ENCODE measurements at regions of chr7 and their contacts with region 1.

Region 1: DNA sequence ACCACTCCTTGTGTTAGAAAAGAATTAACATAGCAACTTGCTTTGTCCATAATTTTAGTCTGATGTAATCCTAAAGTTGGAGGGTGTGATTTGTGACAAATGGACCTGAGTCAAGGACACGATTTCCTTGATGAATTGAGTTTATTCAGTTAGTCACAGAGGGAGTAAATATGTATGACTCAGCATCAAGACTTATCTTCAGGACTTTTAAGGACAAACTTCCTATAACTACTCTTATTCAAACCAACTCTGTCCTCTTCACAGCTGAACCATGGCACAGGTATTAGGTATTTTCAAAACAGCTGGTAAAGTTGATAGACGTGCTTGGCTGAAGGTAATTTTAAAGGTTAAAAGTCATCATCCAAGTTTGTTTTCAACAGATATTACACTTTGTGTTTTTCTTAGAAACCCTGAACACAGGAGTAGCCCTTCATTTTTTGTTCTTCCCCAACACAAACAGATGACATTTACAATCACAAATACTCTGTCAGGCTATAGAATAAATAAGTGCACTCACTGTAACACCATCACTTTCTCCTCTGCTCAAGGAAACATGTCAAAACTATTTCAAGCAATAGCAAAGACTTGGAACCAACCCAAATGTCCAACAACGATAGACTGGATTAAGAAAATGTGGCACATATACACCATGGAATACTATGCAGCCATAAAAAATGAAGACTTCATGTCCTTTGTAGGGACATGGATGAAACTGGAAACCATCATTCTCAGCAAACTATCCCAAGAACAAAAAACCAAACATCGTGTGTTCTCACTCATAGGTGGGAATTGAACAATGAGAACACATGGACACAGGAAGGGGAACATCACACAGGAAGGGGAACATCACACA is 54.5 kb downstream of the COA1 start:
- DNase-seq: no peak
- H3K4me3 Mint-ChIP-seq: no peak overlapping the region
- H3K27ac Mint-ChIP-seq: peak overlapping the region; percentile 30
- H3K4me1 Mint-ChIP-seq: peaks cover 85% of the 10 kb centered on the region
- H3K27me3 Mint-ChIP-seq: no peaks in the 10 kb centered on the region

Region 2: GRCh38 chr7:43590862-43591550 is 83.8 kb before region 1 on chr7:
- CTCF ChIA-PET with region 1: no interaction called
- intact Hi-C with region 1: loop called (anchors 1 kb)
- DNase-seq: peak; percentile 73
- H3K4me3 Mint-ChIP-seq: peak overlapping the region; percentile 37
- H3K27ac Mint-ChIP-seq: peak overlapping the region; percentile 39
- H3K4me1 Mint-ChIP-seq: peaks cover 81% of the 10 kb centered on the region
- H3K27me3 Mint-ChIP-seq: no peaks in the 10 kb centered on the region

Region 3: GRCh38 chr7:43658718-43659548 is 15.9 kb before region 1 on chr7:
- CTCF ChIA-PET with region 1: no interaction called
- intact Hi-C with region 1: loop called (anchors 1 kb)
- DNase-seq: peak; percentile 74
- H3K4me3 Mint-ChIP-seq: peak overlapping the region; percentile 28
- H3K27ac Mint-ChIP-seq: peak overlapping the region; percentile 96
- H3K4me1 Mint-ChIP-seq: peaks cover 65% of the 10 kb centered on the region
- H3K27me3 Mint-ChIP-seq: no peaks in the 10 kb centered on the region

Region 4: GRCh38 chr7:43686991-43687390 is 12.2 kb after region 1 on chr7:
- CTCF ChIA-PET with region 1: interaction called, 5 read pairs
- intact Hi-C with region 1: loop called (anchors 1 kb)
- DNase-seq: no peak
- H3K4me3 Mint-ChIP-seq: no peak overlapping the region
- H3K27ac Mint-ChIP-seq: no peak overlapping the region
- H3K4me1 Mint-ChIP-seq: peaks cover 61% of the 10 kb centered on the region
- H3K27me3 Mint-ChIP-seq: no peaks in the 10 kb centered on the region

Region 5: DNA sequence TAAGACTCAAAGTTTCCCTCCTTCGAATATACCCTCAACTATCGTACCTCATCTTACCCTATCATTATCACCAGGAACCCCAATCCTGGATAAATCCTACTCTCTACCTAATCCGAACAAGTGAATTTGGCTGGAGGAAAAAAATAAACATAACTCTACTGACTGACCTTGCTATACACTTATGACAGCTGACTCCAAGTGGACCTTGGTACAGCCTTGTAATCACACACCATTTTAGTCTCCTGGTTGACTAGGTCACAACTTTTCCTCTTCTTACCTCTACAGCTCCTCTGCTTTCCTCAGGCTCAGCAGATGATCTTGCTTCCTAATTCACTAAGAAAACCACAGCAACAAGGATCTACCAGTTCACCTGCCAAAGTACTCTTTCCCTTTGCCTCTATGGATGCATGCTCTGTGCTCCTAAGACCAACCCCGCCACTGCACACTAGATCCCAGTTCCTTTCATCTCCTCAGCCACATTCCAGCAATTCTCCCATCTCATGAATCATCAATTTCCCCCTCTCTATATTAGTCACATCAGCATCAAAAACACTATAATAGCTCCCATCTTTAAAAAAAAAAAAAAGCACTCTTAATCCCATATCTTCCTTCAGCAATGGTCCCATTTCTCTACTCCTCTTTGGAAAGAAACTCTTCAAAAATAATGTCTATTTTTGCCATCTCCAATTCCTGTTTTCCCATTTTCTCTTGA is 19.0 kb after region 1 on chr7:
- CTCF ChIA-PET with region 1: interaction called, 13 read pairs
- intact Hi-C with region 1: loop called (anchors 1 kb)
- DNase-seq: no peak
- H3K4me3 Mint-ChIP-seq: no peak overlapping the region
- H3K27ac Mint-ChIP-seq: no peak overlapping the region
- H3K4me1 Mint-ChIP-seq: peaks cover 38% of the 10 kb centered on the region
- H3K27me3 Mint-ChIP-seq: no peaks in the 10 kb centered on the region

Region 6: DNA sequence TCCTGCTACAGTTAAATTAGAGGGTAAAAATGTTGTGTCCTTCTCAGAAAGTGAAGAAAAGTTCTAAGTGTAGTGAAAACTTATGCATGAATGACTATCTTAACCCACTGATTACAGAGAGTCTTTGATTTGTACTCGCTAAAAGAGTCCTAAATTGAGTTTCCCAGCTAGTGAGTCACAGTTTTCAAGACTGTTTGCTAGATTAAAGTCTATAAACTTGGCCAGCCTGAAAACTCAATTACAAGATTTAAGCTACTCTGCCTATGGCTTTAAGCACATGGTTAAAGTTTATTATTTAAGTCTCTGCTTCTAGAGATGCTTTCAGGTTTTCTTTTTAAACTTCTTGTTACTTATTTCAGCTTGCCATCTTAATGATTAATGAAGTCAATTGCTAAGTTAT is 150.2 kb after region 1 on chr7:
- CTCF ChIA-PET with region 1: no interaction called
- intact Hi-C with region 1: no loop called
- DNase-seq: no peak
- H3K4me3 Mint-ChIP-seq: no peak overlapping the region
- H3K27ac Mint-ChIP-seq: no peak overlapping the region
- H3K4me1 Mint-ChIP-seq: no peaks in the 10 kb centered on the region
- H3K27me3 Mint-ChIP-seq: peaks cover 13% of the 10 kb centered on the region